PC-9 (cell line): ENCODE measurements at regions of chr2 and their contacts with region 1.

Region 1: DNA sequence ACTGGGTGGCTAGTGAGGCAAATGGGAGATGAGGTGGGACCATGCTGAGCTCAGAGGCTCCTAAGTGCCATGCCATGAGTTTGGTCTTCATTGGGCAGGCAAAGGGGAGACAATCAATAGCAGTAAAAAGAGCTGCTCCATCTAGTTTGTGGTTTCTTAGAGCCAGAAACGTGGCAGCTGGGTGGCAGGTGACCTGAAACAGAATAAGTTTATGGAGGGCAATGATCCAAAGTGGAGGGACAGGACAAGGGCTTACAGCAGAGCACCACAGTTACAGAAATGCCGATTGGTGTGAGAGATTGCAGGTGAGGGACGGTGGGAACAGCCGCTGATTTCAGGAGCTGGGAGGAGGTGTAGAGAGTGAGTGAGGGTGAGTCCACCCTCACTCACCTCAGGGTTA is 237.0 kb downstream of the LPIN1 start:
- DNase-seq: no peak
- H3K4me3 ChIP-seq: no peak overlapping the region
- H3K27ac ChIP-seq: no peak overlapping the region
- H3K4me1 ChIP-seq: no peaks in the 10 kb centered on the region
- H3K27me3 ChIP-seq: no peaks in the 10 kb centered on the region
- CTCF ChIP-seq: no peak

Region 2: DNA sequence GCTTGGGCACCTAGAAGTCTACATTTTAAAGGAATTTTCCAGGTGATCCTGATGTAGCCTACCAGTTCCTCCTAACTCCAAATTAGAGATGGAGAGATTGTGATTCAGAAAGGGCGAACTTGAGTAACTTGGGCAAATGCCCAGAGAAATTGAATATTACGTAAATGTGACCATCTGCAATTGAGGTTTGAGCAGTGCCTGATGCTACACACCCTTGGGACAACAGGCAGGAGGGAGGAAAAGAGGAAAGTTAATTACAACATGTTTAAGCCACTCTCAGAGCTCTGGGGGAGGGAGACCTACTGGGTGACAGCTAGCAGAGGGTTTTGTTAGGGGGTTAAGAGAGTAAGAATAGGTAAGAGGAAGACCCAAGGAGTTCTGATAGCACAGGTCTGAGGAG is 28.1 kb before region 1 on chr2:
- CTCF ChIA-PET with region 1: no interaction called
- POLR2A ChIA-PET with region 1: no interaction called
- intact Hi-C with region 1: no loop called
- DNase-seq: peak in 1 of 2 experiments; percentile 44
- H3K4me3 ChIP-seq: no peak overlapping the region
- H3K27ac ChIP-seq: no peak overlapping the region
- H3K4me1 ChIP-seq: no peaks in the 10 kb centered on the region
- H3K27me3 ChIP-seq: no peaks in the 10 kb centered on the region
- CTCF ChIP-seq: no peak

Region 3: DNA sequence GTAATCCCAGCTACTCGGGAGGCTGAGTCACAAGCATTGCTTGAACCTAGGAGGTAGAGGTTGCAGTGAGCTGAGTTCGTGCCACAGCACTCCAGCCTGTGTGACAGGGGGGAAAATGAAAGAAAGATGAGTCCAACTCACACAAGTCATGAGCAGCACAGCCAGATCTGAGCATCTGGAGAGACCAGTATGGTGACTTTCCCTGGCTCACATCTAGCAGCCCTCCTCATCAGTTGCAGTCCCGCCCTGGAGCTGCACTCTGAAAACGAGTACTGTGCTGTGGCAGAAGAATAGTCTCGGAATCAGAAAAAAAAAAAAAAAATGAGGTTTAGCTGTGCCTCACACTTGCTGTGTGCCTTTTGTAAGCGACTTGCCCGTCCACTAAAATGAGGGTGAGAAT is 658.9 kb after region 1 on chr2:
- CTCF ChIA-PET with region 1: no interaction called
- POLR2A ChIA-PET with region 1: interaction called, 13 read pairs
- intact Hi-C with region 1: no loop called
- DNase-seq: peak in 1 of 2 experiments; percentile 42
- H3K4me3 ChIP-seq: no peak overlapping the region
- H3K27ac ChIP-seq: no peak overlapping the region
- H3K4me1 ChIP-seq: peaks cover 7% of the 10 kb centered on the region; the same call in 1 of the 2 replicates
- H3K27me3 ChIP-seq: no peaks in the 10 kb centered on the region
- CTCF ChIP-seq: no peak